ENCODE measurements at regions of chr15 and their contacts with region 1.

Region 1: GRCh38 chr15:94119923-94120775 is 111.2 kb upstream of the MCTP2 start:
- DNase-seq: peak; percentile 60 to 83 (median 63)
- H3K4me3 ChIP-seq: no peak overlapping the region
- H3K27ac ChIP-seq: peak overlapping the region in 1 of 2 donors; percentile 61
- H3K4me1 ChIP-seq: no peaks in the 10 kb centered on the region
- H3K27me3 ChIP-seq: no peaks in the 10 kb centered on the region
- CTCF ChIP-seq: peak; percentile 91 to 99 (median 99)
- EP300 ChIP-seq: no peak
- POLR2A ChIP-seq: no peak

Region 2: DNA sequence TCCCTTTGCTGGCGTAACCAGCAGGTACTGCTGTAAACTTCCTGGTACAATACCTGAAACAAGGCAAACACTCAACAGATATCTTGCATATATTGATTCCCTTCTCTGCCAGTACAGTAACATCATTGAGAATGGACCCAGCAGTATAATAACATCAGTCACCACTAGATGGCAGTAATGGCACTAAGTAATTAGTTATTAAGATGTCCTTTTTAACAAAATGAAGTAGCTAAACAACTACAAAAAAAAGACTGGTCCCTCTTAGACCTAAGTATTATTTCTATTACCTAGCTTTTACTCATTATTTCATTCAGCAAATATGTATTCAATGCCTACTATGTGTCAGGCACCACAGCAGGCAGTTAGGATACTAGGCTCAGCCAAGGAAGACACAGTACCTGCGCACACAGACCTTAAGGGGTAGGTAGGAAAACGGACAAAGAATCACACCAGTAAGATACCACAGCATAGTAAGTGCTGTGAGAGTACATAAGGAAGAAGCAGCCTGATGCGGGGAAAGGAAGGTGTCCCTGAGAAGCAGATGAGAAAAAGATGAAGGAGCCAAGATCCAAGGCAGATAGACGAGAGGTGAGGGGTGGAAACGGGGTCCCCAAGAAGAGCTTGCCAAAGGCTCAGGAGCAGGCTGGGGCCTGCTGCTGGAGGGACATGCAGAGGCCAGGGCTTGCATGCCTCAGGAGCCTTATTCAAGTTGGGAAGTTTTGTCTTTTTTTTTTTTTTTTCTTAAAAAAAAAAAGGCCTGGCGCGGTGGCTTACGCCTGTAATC is 1322.8 kb before region 1 on chr15:
- intact Hi-C with region 1: loop called in 2 of 4 experiments (anchors 5 to 10 kb)
- DNase-seq: peak in 1 of 5 donors; percentile 37
- H3K4me3 ChIP-seq: no peak overlapping the region
- H3K27ac ChIP-seq: peak overlapping the region in 1 of 2 donors; percentile 39
- H3K4me1 ChIP-seq: peaks cover 6% of the 10 kb centered on the region
- H3K27me3 ChIP-seq: no peaks in the 10 kb centered on the region
- CTCF ChIP-seq: peak; percentile 67 to 83 (median 81)
- EP300 ChIP-seq: no peak
- POLR2A ChIP-seq: no peak

Region 3: DNA sequence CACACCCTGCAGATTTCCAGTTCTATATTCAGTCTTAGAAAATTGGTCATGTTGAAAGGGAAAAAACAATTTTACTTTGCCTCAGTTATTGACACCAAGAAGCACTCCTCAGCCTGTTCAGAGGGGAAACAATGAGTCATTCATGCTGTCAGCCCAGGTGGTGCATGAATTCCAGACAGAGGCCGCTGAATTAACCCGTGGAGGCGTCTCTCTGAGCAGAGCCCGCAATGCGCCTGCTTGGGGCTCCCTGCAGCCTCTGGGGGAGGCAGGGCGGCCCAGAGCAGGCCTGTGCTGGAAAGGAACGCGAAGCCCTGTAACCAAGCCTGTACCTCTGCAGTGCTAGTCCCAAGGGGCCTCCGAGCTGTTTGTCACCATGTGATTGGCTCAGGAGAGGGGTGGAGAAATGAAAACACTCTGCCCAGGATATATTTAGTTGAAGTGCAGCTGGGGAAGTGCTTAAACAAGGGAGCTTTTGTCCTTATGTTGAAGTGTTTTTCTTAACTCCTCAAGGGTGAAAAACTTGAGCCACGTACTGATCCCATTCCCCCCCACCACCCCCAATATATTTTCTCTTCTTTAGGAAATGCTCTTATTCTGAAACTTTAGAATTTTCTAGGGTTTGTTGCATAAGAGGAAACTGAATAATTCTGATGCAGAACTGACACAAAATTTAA is 1288.4 kb before region 1 on chr15:
- intact Hi-C with region 1: no loop called
- DNase-seq: peak; percentile 87 to 94 (median 92)
- H3K4me3 ChIP-seq: peak overlapping the region; percentile 29
- H3K27ac ChIP-seq: peak overlapping the region; percentile 62 to 86
- H3K4me1 ChIP-seq: peaks cover 16% of the 10 kb centered on the region
- H3K27me3 ChIP-seq: no peaks in the 10 kb centered on the region
- CTCF ChIP-seq: no peak
- EP300 ChIP-seq: peak; percentile 43
- POLR2A ChIP-seq: peak; percentile 75

Region 4: DNA sequence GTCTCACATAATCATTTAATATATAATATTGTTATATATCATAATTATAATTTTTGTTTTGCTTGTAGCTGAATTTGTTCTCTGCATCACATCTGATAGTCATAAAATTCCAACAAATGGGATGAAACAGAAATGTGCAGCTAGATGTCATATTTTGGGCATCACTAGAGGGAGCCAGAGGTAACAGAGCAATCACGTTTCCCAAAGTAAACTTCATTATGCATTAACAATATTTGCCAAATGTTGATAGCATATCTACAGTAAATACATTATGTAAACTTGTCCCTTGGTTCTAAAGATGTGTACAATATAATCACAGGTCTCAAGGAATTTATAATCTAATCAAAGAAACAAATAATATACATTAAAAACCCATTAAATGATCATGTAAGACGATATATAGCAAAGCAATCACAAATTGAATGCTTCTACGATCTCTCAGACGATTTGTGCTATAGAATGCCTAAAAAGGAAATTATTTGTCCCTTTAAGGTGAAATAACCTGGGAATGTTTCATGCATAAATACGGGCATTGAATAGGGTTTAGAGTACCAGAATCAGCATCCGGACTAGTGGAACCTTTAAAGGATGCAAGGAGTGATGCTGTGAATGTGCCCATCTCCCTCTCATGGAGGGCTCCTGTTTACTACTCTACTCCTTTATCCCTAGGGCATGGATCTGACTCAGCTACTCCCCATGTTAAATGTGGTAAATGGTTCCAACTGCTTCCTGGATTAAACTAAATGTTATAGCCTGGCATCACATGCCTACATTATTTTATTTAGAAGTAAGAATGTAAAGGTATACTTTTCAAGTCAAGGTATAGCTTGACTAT is 122.8 kb before region 1 on chr15:
- intact Hi-C with region 1: loop called in 1 of 4 experiments (anchors 5 kb)
- DNase-seq: no peak
- H3K4me3 ChIP-seq: no peak overlapping the region
- H3K27ac ChIP-seq: no peak overlapping the region
- H3K4me1 ChIP-seq: no peaks in the 10 kb centered on the region
- H3K27me3 ChIP-seq: no peaks in the 10 kb centered on the region
- CTCF ChIP-seq: peak in 2 of 3 donors; percentile 36 to 63
- EP300 ChIP-seq: no peak
- POLR2A ChIP-seq: no peak

Region 5: DNA sequence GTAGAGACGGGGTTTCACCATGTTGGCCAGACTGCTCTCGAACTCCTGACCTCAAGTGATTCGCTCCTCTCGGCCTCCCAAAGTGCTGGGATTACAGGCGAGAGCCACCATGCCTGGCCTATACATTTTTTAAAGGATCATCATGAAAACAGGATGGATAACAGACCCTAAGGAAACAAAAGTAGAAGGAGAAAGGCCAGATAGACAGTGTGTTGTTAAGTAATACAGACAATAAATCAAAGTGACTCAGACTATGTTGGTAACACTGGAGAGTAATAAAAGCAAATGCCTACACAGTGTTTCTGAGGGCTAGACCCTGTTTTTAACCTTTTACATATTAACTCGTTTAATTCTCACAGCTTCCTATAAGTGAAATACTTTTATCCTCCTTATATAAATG is 22.6 kb before region 1 on chr15:
- intact Hi-C with region 1: no loop called
- DNase-seq: no peak
- H3K4me3 ChIP-seq: no peak overlapping the region
- H3K27ac ChIP-seq: no peak overlapping the region
- H3K4me1 ChIP-seq: no peaks in the 10 kb centered on the region
- H3K27me3 ChIP-seq: no peaks in the 10 kb centered on the region
- CTCF ChIP-seq: no peak
- EP300 ChIP-seq: no peak
- POLR2A ChIP-seq: no peak

Measured in ovary (tissue), 10 donors.